ENCODE measurements at regions of chr17 and their contacts with region 1.

Region 1: GRCh38 chr17:41403798-41404671 is 6.6 kb upstream of the KRT31 start:
- DNase-seq: peak in 1 of 2 donors; percentile 91
- H3K4me3 ChIP-seq: no peak overlapping the region
- H3K27ac ChIP-seq: peak overlapping the region; percentile 88 to 91
- H3K4me1 ChIP-seq: peaks cover 0 to 14% of the 10 kb centered on the region in 2 donors
- H3K27me3 ChIP-seq: no peaks in the 10 kb centered on the region
- CTCF ChIP-seq: no peak
- POLR2A ChIP-seq: no peak

Region 2: DNA sequence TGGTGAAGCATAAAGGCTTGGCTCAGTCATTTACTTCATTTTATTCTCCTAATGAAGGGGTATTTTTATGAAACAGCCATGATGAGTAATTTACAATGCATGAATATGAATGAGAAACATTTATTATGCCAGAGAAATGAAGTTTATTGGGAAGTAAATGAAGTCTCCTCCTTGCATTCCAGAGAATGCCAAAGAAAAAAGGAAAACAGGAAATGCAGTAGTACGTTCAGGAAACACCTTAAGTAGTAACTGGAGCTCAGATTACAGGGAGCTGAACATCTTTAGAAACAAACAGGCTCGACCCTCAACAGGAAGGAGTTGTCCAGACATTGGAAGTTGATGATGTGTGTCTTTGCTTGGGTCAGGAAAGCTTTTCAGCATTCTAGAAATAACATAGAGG is 26.5 kb before region 1 on chr17:
- intact Hi-C with region 1: loop called (anchors 1 kb)
- DNase-seq: no peak
- H3K4me3 ChIP-seq: no peak overlapping the region
- H3K27ac ChIP-seq: no peak overlapping the region
- H3K4me1 ChIP-seq: no peaks in the 10 kb centered on the region
- H3K27me3 ChIP-seq: no peaks in the 10 kb centered on the region
- CTCF ChIP-seq: no peak
- POLR2A ChIP-seq: no peak

Region 3: GRCh38 chr17:41429667-41430066 is 25.6 kb after region 1 on chr17:
- intact Hi-C with region 1: loop called (anchors 2 kb)
- DNase-seq: no peak
- H3K4me3 ChIP-seq: no peak overlapping the region
- H3K27ac ChIP-seq: no peak overlapping the region
- H3K4me1 ChIP-seq: no peaks in the 10 kb centered on the region
- H3K27me3 ChIP-seq: no peaks in the 10 kb centered on the region
- CTCF ChIP-seq: no peak
- POLR2A ChIP-seq: no peak

Region 4: GRCh38 chr17:41442739-41443138 is 38.7 kb after region 1 on chr17:
- intact Hi-C with region 1: no loop called
- DNase-seq: no peak
- H3K4me3 ChIP-seq: no peak overlapping the region
- H3K27ac ChIP-seq: no peak overlapping the region
- H3K4me1 ChIP-seq: no peaks in the 10 kb centered on the region
- H3K27me3 ChIP-seq: no peaks in the 10 kb centered on the region
- CTCF ChIP-seq: no peak
- POLR2A ChIP-seq: no peak

Measured in breast epithelium (tissue), 4 donors.